Activated B cell treated with CpG ODN at 0.5 μM for 24 hours (primary cell): ENCODE measurements at regions of chr6 and their contacts with region 1.

Region 1: GRCh38 chr6:36885461-36886401 is at the start of gene C6orf89:
- DNase-seq: peak; percentile 89
- ATAC-seq: peak; percentile 99
- H3K4me3 Mint-ChIP-seq: peak within 1 kb of the TSS; percentile 89
- H3K27ac Mint-ChIP-seq: peak within 1 kb of the TSS; percentile 94
- H3K4me1 Mint-ChIP-seq: peaks cover 30% of the 10 kb centered on the region
- H3K27me3 Mint-ChIP-seq: no peaks in the 10 kb centered on the region
- CTCF ChIP-seq: peak; percentile 34
- total RNA-seq, gene C6orf89: 29.7 and 30.3 TPM in 2 replicates

Region 2: GRCh38 chr6:36765594-36766398 is 119.9 kb before region 1 on chr6:
- CTCF ChIA-PET with region 1: interaction called, 10 read pairs
- POLR2A ChIA-PET with region 1: no interaction called
- intact Hi-C with region 1: loop called (anchors 1 kb)
- DNase-seq: peak; percentile 66
- ATAC-seq: peak; percentile 92
- H3K4me3 Mint-ChIP-seq: peak overlapping the region; percentile 44
- H3K27ac Mint-ChIP-seq: peak overlapping the region; percentile 24
- H3K4me1 Mint-ChIP-seq: peaks cover 48% of the 10 kb centered on the region
- H3K27me3 Mint-ChIP-seq: no peaks in the 10 kb centered on the region
- CTCF ChIP-seq: peak; percentile 63

Region 3: GRCh38 chr6:36962874-36963273 is 77.1 kb after region 1 on chr6:
- CTCF ChIA-PET with region 1: interaction called, 3 read pairs
- POLR2A ChIA-PET with region 1: no interaction called
- intact Hi-C with region 1: loop called (anchors 5 kb)
- DNase-seq: peak; percentile 74
- ATAC-seq: peak; percentile 80
- H3K4me3 Mint-ChIP-seq: peak overlapping the region; percentile 67
- H3K27ac Mint-ChIP-seq: peak overlapping the region; percentile 88
- H3K4me1 Mint-ChIP-seq: peaks cover 30% of the 10 kb centered on the region
- H3K27me3 Mint-ChIP-seq: no peaks in the 10 kb centered on the region
- CTCF ChIP-seq: no peak

Region 4: GRCh38 chr6:36985808-36986703 is 100.3 kb after region 1 on chr6 and contains the start of gene MTCH1:
- CTCF ChIA-PET with region 1: no interaction called
- POLR2A ChIA-PET with region 1: interaction called, 12 read pairs
- intact Hi-C with region 1: loop called (anchors 1 kb)
- DNase-seq: peak; percentile 96
- ATAC-seq: peak; percentile 87
- H3K4me3 Mint-ChIP-seq: peak within 1 kb of the TSS; percentile 96
- H3K27ac Mint-ChIP-seq: peak within 1 kb of the TSS; percentile 91
- H3K4me1 Mint-ChIP-seq: peaks cover 20% of the 10 kb centered on the region
- H3K27me3 Mint-ChIP-seq: no peaks in the 10 kb centered on the region
- CTCF ChIP-seq: no peak
- total RNA-seq, gene MTCH1: 128 and 133 TPM in 2 replicates

Region 5: GRCh38 chr6:37169496-37170272 is 284.0 kb after region 1 on chr6 and contains the start of gene PIM1:
- CTCF ChIA-PET with region 1: interaction called, 7 read pairs
- POLR2A ChIA-PET with region 1: no interaction called
- intact Hi-C with region 1: loop called (anchors 1 kb)
- DNase-seq: peak; percentile 88
- ATAC-seq: peak; percentile 84
- H3K4me3 Mint-ChIP-seq: peak within 1 kb of the TSS; percentile 95
- H3K27ac Mint-ChIP-seq: peak within 1 kb of the TSS; percentile 96
- H3K4me1 Mint-ChIP-seq: peaks cover 47% of the 10 kb centered on the region
- H3K27me3 Mint-ChIP-seq: no peaks in the 10 kb centered on the region
- CTCF ChIP-seq: no peak
- total RNA-seq, gene PIM1: 272 and 283 TPM in 2 replicates